Activated CD4-positive, alpha-beta T cell treated with anti-CD3 and anti-CD28 coated beads, Interleukin-2, amount 10 ng/mL, durations not matched to agents 24 days and 14 days (primary cell): ENCODE measurements at regions of chr9 and their contacts with region 1.

Region 1: DNA sequence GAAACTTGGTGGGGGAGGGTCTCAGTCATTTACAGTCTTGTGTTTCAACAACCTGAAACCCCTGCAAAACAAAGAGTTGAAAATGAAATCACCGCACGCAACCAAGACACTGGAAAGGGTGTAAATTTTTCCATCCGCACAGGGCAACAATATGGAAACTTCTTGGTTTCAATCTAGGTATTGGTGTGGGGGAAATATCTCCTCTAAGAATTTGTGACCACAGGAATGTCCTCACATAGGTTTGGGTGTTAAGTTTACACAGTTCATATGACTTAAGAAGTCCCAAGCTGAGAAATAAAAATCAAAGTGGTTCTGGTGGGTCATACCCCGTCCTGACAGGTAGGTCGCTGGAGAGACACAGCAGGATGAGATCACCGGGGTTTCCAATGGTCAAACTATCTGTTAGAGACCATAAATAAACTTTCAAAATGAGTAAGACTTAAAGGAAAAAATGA is 51.9 kb upstream of the PIP5K1B start:
- DNase-seq: peak; percentile 77
- H3K4me3 Mint-ChIP-seq: peak overlapping the region; percentile 72
- H3K27ac Mint-ChIP-seq: peak overlapping the region; percentile 93
- H3K4me1 Mint-ChIP-seq: peaks cover 47% of the 10 kb centered on the region
- H3K27me3 Mint-ChIP-seq: peaks cover 2% of the 10 kb centered on the region

Region 2: DNA sequence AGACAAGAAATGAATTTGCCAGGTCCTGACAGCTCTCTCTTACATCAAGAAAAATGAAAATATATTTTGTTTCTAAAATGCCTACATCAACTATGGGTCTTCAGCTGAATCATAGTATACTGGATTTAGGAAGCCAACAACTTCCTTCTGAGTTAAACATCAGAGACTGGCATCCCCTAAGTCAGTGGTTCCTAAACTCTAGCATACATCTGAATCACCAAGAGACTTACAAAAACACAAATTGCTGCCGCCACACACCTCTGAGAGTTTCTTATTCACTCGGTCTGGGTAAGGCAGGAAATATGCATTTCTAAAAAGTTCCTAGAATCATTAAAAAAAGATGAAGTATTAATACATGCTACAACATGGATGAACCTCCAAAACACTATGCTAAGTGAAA is 52.1 kb before region 1 on chr9:
- intact Hi-C with region 1: loop called (anchors 5 kb)
- DNase-seq: no peak
- H3K4me3 Mint-ChIP-seq: no peak overlapping the region
- H3K27ac Mint-ChIP-seq: no peak overlapping the region
- H3K4me1 Mint-ChIP-seq: peaks cover 2% of the 10 kb centered on the region
- H3K27me3 Mint-ChIP-seq: peaks cover 5% of the 10 kb centered on the region

Region 3: GRCh38 chr9:68683433-68683832 is 30.3 kb after region 1 on chr9:
- intact Hi-C with region 1: loop called (anchors 1 kb)
- DNase-seq: no peak
- H3K4me3 Mint-ChIP-seq: peak overlapping the region; percentile 30
- H3K27ac Mint-ChIP-seq: no peak overlapping the region
- H3K4me1 Mint-ChIP-seq: peaks cover 22% of the 10 kb centered on the region
- H3K27me3 Mint-ChIP-seq: peaks cover 1% of the 10 kb centered on the region

Region 4: DNA sequence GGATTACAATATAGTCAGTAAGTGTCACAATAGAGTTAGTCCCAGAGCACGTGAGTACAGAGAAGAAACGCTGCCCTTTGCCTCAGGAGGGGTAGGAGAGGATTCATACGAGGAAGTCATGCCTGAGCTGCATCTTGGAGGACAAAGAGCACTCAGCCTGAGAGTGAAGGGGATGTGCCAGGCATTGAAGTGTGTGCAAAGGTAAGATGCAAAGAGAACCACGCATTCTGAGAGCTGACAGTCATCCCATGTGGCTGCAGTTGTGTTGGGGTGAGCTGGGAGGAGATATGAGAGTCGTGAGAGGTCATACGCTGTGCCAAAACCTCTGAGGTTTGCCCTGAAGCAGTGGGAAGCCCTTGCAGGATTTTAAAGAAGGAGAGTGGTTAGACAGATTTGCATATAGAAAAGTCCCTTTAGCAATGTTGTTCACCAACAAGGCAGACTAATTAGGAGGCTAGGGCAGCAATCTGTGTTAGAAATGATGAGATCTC is 149.4 kb after region 1 on chr9:
- intact Hi-C with region 1: loop called (anchors 1 kb)
- DNase-seq: peak; percentile 74
- H3K4me3 Mint-ChIP-seq: no peak overlapping the region
- H3K27ac Mint-ChIP-seq: no peak overlapping the region
- H3K4me1 Mint-ChIP-seq: peaks cover 11% of the 10 kb centered on the region
- H3K27me3 Mint-ChIP-seq: no peaks in the 10 kb centered on the region

Region 5: GRCh38 chr9:69027355-69028096 is 374.4 kb after region 1 on chr9:
- intact Hi-C with region 1: loop called (anchors 2 kb)
- DNase-seq: peak; percentile 84
- H3K4me3 Mint-ChIP-seq: no peak overlapping the region
- H3K27ac Mint-ChIP-seq: no peak overlapping the region
- H3K4me1 Mint-ChIP-seq: peaks cover 44% of the 10 kb centered on the region
- H3K27me3 Mint-ChIP-seq: peaks cover 2% of the 10 kb centered on the region